ENCODE measurements at regions of chr7 and their contacts with region 1.

Region 1: GRCh38 chr7:55065079-55065478 is 46.3 kb downstream of the EGFR start:
- DNase-seq: peak; percentile 78 to 96
- H3K4me3 ChIP-seq: peak overlapping the region; percentile 27
- H3K27ac ChIP-seq: peak overlapping the region; percentile 96
- H3K4me1 ChIP-seq: peaks cover 58% of the 10 kb centered on the region
- H3K27me3 ChIP-seq: no peaks in the 10 kb centered on the region
- CTCF ChIP-seq: no peak

Region 2: GRCh38 chr7:54788664-54789063 is 276.4 kb before region 1 on chr7:
- CTCF ChIA-PET with region 1: interaction called, 4 read pairs
- POLR2A ChIA-PET with region 1: interaction called, 5 read pairs
- intact Hi-C with region 1: loop called (anchors 1 kb)
- DNase-seq: peak; percentile 79 to 99
- H3K4me3 ChIP-seq: no peak overlapping the region
- H3K27ac ChIP-seq: peak overlapping the region; percentile 27
- H3K4me1 ChIP-seq: peaks cover 29% of the 10 kb centered on the region
- H3K27me3 ChIP-seq: no peaks in the 10 kb centered on the region
- CTCF ChIP-seq: peak; percentile 95

Region 3: DNA sequence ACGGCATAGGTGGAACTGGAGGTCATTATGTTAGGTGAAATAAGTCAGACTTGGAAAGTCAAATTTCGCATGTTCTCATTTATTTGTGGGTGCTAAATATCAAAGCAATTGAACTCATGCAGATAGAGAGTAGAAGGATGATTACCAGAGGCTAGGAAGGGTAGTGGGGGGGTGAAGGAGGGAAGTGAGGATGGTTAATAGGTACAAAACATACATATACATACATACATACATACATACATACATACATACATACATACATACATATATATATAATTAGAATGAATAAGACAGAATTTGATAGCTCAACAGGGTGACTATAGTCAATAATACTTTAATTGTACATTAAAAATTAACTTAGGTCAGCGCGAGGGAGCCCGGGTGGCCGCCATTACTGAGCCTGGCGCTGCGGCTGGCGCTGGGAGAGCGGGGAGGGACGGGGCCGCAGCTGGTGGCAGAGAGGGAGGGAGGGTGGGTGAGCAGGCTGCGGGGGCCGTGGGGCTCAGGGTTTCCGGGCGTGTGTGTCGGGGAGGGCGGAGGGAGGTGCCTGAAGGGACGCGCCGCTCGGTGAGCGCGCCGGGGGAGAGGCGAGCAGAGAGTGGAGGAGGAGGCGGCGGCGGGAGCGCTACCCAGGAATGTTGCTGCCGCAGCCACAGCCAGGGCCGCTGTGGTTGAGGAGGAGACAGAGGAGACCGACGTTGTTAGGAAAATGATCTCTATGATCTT is 132.1 kb before region 1 on chr7:
- CTCF ChIA-PET with region 1: no interaction called
- POLR2A ChIA-PET with region 1: no interaction called
- intact Hi-C with region 1: loop called (anchors 1 kb)
- DNase-seq: peak; percentile 74 to 91
- H3K4me3 ChIP-seq: peak overlapping the region; percentile 60
- H3K27ac ChIP-seq: no peak overlapping the region
- H3K4me1 ChIP-seq: peaks cover 14% of the 10 kb centered on the region
- H3K27me3 ChIP-seq: no peaks in the 10 kb centered on the region
- CTCF ChIP-seq: no peak

Region 4: DNA sequence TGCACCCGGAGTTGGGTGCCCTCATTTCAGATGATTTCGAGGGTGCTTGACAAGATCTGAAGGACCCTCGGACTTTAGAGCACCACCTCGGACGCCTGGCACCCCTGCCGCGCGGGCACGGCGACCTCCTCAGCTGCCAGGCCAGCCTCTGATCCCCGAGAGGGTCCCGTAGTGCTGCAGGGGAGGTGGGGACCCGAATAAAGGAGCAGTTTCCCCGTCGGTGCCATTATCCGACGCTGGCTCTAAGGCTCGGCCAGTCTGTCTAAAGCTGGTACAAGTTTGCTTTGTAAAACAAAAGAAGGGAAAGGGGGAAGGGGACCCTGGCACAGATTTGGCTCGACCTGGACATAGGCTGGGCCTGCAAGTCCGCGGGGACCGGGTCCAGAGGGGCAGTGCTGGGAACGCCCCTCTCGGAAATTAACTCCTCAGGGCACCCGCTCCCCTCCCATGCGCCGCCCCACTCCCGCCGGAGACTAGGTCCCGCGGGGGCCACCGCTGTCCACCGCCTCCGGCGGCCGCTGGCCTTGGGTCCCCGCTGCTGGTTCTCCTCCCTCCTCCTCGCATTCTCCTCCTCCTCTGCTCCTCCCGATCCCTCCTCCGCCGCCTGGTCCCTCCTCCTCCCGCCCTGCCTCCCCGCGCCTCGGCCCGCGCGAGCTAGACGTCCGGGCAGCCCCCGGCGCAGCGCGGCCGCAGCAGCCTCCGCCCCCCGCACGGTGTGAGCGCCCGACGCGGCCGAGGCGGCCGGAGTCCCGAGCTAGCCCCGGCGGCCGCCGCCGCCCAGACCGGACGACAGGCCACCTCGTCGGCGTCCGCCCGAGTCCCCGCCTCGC is 46.5 kb before region 1 on chr7 and contains the start of gene EGFR:
- CTCF ChIA-PET with region 1: interaction called, 6 read pairs
- POLR2A ChIA-PET with region 1: interaction called, 3 read pairs
- intact Hi-C with region 1: loop called (anchors 1 kb)
- DNase-seq: peak; percentile 80 to 96
- H3K4me3 ChIP-seq: peak within 1 kb of the TSS; percentile 79
- H3K27ac ChIP-seq: peak within 1 kb of the TSS; percentile 68
- H3K4me1 ChIP-seq: peaks cover 37% of the 10 kb centered on the region
- H3K27me3 ChIP-seq: no peaks in the 10 kb centered on the region
- CTCF ChIP-seq: no peak
- total RNA-seq, gene EGFR: 324 and 342 TPM in 2 replicates

Region 5: DNA sequence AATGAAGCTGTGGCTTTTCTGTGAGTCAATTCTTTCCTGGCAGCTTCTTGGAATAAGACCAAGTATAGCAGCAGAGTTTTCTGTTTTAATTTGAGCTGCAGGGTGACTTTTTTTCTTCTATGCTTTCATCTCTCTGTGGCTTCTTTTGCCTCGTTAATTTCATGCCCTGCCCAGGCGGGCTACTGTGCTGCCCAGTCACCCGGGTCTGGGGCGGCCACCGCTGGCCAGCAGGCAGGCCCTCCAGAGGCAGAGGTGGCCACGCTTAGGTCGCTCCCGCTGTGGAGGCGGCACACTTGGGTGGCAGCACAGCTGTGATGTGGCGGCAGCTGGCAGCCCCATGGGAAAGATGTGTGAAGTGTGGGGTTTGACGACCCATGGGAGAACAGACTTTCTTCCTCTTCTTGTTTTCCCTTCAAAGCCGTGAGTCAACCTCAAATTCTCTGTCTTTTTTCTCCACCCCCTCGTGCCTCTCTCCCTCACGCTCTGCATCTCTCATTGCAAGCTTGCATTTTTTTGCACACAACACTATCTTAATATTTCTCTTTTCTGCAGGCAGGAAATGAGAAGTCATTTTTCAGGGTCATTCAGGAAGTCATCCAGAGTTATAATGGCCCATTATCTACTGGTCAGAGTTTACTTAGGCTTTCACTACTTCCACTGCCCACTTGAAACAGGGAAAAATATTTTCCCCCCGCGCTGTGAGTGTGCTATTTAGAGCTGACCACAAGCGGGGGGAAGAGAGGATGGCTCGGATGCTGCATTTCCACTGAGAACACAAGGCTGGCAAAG is 21.5 kb after region 1 on chr7:
- CTCF ChIA-PET with region 1: interaction called, 5 read pairs
- POLR2A ChIA-PET with region 1: interaction called, 21 read pairs
- intact Hi-C with region 1: loop called (anchors 2 kb)
- DNase-seq: peak; percentile 65 to 87
- H3K4me3 ChIP-seq: no peak overlapping the region
- H3K27ac ChIP-seq: peak overlapping the region; percentile 25
- H3K4me1 ChIP-seq: peaks cover 19% of the 10 kb centered on the region
- H3K27me3 ChIP-seq: no peaks in the 10 kb centered on the region
- CTCF ChIP-seq: no peak

Region 6: DNA sequence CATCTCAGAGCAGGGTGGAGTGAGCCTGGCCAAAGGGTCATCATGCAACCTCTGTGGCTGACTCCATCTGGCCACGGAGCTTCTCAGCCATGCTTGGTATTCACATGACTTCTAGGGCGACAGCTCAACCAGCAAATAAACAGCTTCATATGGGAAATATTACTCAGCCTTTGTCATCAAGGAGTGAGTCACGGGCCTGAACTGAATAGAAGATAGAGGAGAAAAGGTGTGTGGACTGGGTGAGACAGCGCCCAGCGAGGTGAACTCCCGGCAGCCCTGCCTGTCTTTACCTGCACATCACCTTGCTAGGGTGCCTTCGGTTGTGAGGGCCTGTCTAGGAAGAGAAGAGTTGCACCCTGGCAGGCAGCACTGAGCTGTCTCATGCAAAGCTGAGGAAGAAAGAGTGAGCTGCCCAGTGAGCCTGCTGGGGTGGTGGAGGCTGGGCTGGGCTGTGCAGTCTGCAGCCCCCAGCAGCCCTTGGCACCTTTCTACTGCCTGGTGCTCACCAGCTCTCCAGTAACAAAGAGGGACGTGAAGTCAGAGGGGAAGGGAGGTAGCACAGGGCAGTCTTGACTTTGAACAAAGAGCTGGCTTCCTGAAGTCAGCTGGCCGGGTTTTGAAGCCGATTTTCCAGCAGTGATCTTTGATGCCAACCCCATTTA is 67.9 kb after region 1 on chr7:
- CTCF ChIA-PET with region 1: interaction called, 7 read pairs
- POLR2A ChIA-PET with region 1: interaction called, 15 read pairs
- intact Hi-C with region 1: loop called (anchors 1 kb)
- DNase-seq: peak; percentile 98 to 100
- H3K4me3 ChIP-seq: peak overlapping the region; percentile 39
- H3K27ac ChIP-seq: peak overlapping the region; percentile 92
- H3K4me1 ChIP-seq: peaks cover 77% of the 10 kb centered on the region
- H3K27me3 ChIP-seq: no peaks in the 10 kb centered on the region
- CTCF ChIP-seq: no peak

Region 7: GRCh38 chr7:55255496-55256435 is 190.7 kb after region 1 on chr7:
- CTCF ChIA-PET with region 1: interaction called, 11 read pairs
- POLR2A ChIA-PET with region 1: no interaction called
- intact Hi-C with region 1: loop called (anchors 1 kb)
- DNase-seq: peak; percentile 81 to 96
- H3K4me3 ChIP-seq: peak overlapping the region; percentile 64
- H3K27ac ChIP-seq: no peak overlapping the region
- H3K4me1 ChIP-seq: peaks cover 5% of the 10 kb centered on the region
- H3K27me3 ChIP-seq: no peaks in the 10 kb centered on the region
- CTCF ChIP-seq: peak; percentile 99